ENCODE measurements at regions of chr11 and their contacts with region 1.

Region 1: DNA sequence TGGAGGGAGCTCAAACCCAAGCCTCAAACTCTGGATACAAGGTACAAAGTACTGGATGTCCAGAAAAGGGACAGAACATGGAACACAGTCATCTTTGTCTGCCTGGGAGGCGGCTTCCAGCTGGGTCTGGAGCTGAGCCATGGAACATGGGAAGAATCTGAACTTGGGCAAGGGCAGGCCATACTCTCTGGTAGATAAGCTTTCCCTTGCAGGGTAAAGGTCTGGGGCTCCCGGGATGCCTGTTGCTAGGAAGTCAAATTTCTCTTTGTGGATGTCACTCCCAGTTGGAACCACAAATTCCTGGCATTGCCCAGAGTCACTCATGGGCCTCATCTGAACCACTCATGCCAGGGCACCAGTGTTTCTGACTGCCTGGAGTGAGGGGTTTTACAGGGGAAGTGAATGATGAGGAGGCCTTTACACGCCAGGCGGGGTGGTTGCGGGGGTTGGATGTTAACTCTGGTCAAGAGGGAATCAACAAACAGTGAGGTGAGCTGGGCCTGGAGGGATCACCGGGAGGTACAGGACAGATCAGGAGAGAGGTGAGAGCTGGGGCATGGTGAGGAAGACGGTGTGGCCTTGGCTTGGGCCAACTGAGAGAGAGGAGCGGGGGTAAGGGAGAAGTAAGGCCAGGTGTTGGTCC is 5.7 kb downstream of the FTH1 start:
- DNase-seq: peak; percentile 68 to 76
- H3K4me3 ChIP-seq: no peak overlapping the region
- H3K27ac ChIP-seq: peak overlapping the region; percentile 99
- H3K4me1 ChIP-seq: peaks cover 59% of the 10 kb centered on the region
- H3K27me3 ChIP-seq: no peaks in the 10 kb centered on the region
- CTCF ChIP-seq: no peak

Region 2: DNA sequence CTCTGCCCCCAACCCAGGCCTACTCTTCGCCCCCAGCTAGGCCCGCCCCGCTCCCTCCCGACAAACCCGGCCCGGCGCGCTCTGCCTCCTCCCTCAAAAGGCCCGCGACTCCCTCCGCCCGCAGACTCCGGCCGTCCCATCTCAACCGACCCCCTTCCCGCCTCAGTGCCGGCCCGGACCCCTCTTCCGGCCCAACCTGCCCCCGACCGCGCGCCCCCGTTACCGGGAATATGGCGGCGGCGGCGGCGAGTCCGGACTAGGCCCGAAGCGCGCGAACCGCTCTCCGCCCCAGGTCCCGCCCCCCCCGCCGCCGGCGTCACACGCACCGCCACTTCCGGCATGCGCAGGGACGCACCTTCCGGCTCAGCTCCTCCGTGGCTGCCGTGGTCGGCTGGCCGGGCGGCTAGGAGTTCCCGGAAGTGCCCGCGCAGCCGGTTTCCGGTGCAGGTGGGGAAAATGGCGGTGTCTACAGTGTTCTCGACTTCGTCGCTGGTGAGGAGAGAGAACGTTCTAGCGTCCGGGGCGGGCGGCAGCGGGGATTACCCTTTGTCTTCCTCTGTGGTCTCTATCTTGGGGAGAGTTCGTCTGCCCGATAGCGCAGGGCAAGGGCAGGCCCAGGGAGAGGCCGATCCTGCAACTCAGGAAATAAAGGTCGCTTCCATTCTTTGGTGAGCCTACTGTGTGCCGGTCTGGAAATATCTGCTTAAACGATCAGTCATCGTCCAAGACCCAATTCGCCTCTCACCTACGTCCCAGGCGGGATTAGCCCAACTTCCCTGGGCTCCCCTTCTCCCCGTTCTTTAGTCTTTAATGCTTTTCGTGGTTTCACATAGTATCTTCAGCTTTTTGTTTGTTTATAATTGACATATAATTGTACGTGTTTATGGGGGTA is 531.8 kb before region 1 on chr11 and contains the starts of genes CPSF7 and SDHAF2:
- CTCF ChIA-PET with region 1: interaction called, 17 read pairs
- POLR2A ChIA-PET with region 1: no interaction called
- intact Hi-C with region 1: no loop called
- DNase-seq: peak; percentile 89 to 97
- H3K4me3 ChIP-seq: peak within 1 kb of the TSS; percentile 97
- H3K27ac ChIP-seq: peak within 1 kb of the TSS; percentile 86
- H3K4me1 ChIP-seq: peaks cover 33% of the 10 kb centered on the region
- H3K27me3 ChIP-seq: no peaks in the 10 kb centered on the region
- CTCF ChIP-seq: 0 out of 2 replicates have a peak, but pooled peaks have one; percentile 9
- total RNA-seq, gene CPSF7: 82.7 and 87.0 TPM in 2 replicates
- total RNA-seq, gene SDHAF2: 32.5 and 38.3 TPM in 2 replicates

Region 3: DNA sequence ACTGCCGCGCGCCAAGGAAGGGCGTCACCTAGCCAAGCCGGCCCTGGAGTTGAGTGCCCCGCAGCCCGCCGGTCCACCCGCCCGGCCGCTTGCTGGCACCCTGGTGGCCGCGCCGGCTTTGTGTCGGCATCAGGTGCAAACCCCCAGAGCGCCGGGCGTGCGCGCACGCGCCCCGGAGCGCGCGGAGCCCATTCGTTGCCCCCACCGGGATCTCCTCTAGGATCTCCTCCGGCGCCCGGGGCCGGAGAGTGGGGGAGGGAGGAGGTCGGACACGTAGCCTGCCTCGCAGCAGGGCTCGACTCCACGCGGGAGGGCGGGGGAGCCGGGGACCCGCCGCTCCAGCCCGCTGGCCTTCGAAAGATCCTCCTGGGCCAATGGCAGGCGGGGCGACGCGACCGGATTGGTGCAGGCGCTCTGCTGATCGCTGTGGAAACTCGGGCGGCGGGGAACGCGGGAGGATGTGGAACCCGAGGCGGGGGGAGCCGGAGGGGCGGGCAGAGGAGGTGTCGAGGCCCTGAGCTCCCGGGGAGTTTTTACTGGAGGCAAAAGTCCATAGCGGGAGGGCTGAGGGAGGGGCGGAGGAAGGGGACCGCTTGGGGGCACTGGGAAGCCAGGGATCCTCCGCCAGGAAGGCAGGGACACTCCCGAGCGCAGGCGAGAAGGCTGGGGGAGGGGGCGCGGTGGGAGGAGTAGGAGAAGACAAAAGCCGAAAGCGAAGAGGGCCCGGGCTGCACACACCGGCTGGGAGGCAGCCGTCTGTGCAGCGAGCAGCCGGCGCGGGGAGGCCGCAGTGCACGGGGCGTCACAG is 133.9 kb before region 1 on chr11 and contains the start of gene FADS2:
- CTCF ChIA-PET with region 1: no interaction called
- POLR2A ChIA-PET with region 1: interaction called, 18 read pairs
- intact Hi-C with region 1: no loop called
- DNase-seq: peak in 1 of 2 experiments; percentile 92
- H3K4me3 ChIP-seq: no peak within 1 kb of the TSS
- H3K27ac ChIP-seq: no peak within 1 kb of the TSS
- H3K4me1 ChIP-seq: no peaks in the 10 kb centered on the region
- H3K27me3 ChIP-seq: no peaks in the 10 kb centered on the region
- CTCF ChIP-seq: no peak
- total RNA-seq, gene FADS2: 223 and 514 TPM in 2 replicates

Region 4: DNA sequence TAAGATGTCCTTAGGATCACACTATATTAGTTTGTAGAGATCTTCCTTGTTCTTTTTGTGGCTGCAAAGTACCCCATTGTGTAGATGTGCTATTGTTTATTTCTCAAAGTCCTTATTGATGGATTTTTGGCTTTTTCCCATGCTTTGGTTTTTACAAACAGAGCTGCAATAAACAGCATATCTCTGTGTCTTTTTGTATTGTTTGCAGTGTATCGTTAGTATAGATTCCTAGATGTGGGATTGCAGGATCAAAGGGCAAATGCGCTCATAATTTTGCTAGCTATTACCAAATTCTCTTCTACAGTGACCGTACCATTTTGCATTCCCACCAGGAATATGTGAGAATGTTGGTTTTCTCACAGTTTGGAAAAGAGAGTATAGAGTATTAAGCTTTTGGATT is 33.3 kb after region 1 on chr11:
- CTCF ChIA-PET with region 1: no interaction called
- POLR2A ChIA-PET with region 1: interaction called, 10 read pairs
- intact Hi-C with region 1: no loop called
- DNase-seq: no peak
- H3K4me3 ChIP-seq: no peak overlapping the region
- H3K27ac ChIP-seq: no peak overlapping the region
- H3K4me1 ChIP-seq: no peaks in the 10 kb centered on the region
- H3K27me3 ChIP-seq: no peaks in the 10 kb centered on the region
- CTCF ChIP-seq: no peak

Region 5: GRCh38 chr11:62880803-62881578 is 919.3 kb after region 1 on chr11 and contains the start of gene SLC3A2:
- CTCF ChIA-PET with region 1: no interaction called
- POLR2A ChIA-PET with region 1: interaction called, 15 read pairs
- intact Hi-C with region 1: no loop called
- DNase-seq: peak; percentile 85 to 90
- H3K4me3 ChIP-seq: peak within 1 kb of the TSS; percentile 69
- H3K27ac ChIP-seq: peak within 1 kb of the TSS; percentile 96
- H3K4me1 ChIP-seq: peaks cover 48% of the 10 kb centered on the region
- H3K27me3 ChIP-seq: no peaks in the 10 kb centered on the region
- CTCF ChIP-seq: peak; percentile 68
- total RNA-seq, gene SLC3A2: 513 and 619 TPM in 2 replicates

Measured in PC-9 (cell line).